Activated CD4-positive, alpha-beta T cell treated with anti-CD3 and anti-CD28 coated beads, Interleukin-2, amount 10 ng/mL, durations not matched to agents 7 days and 5 days (primary cell): ENCODE measurements at regions of chr19 and their contacts with region 1.

Region 1: GRCh38 chr19:18058208-18059030 is 28.3 kb downstream of the IL12RB1 start:
- DNase-seq: peak; percentile 84
- H3K4me3 Mint-ChIP-seq: no peak overlapping the region
- H3K27ac Mint-ChIP-seq: peak overlapping the region; percentile 82
- H3K4me1 Mint-ChIP-seq: peaks cover 20% of the 10 kb centered on the region
- H3K27me3 Mint-ChIP-seq: no peaks in the 10 kb centered on the region

Region 2: GRCh38 chr19:18007044-18007916 is 51.1 kb before region 1 on chr19:
- CTCF ChIA-PET with region 1: interaction called, 83 read pairs
- POLR2A ChIA-PET with region 1: interaction called, 3 read pairs
- DNase-seq: peak; percentile 79
- H3K4me3 Mint-ChIP-seq: peak overlapping the region; percentile 74
- H3K27ac Mint-ChIP-seq: peak overlapping the region; percentile 84
- H3K4me1 Mint-ChIP-seq: peaks cover 46% of the 10 kb centered on the region
- H3K27me3 Mint-ChIP-seq: no peaks in the 10 kb centered on the region

Region 3: GRCh38 chr19:18044825-18045304 is 13.6 kb before region 1 on chr19:
- CTCF ChIA-PET with region 1: interaction called, 16 read pairs
- POLR2A ChIA-PET with region 1: no interaction called
- DNase-seq: peak; percentile 94
- H3K4me3 Mint-ChIP-seq: peak overlapping the region; percentile 53
- H3K27ac Mint-ChIP-seq: peak overlapping the region; percentile 87
- H3K4me1 Mint-ChIP-seq: peaks cover 39% of the 10 kb centered on the region
- H3K27me3 Mint-ChIP-seq: peaks cover 22% of the 10 kb centered on the region